Natural killer cell (primary cell): ENCODE measurements at regions of chr2 and their contacts with region 1.

Region 1: GRCh38 chr2:112634153-112634873 is 11.4 kb upstream of the SLC20A1 start:
- DNase-seq: peak in 1 of 2 donors; percentile 68
- ATAC-seq: peak; percentile 22 to 34 (median 28)
- H3K4me3 ChIP-seq: no peak overlapping the region
- H3K4me3 Mint-ChIP-seq: peak overlapping the region; percentile 68
- H3K27ac ChIP-seq: peak overlapping the region; percentile 72
- H3K27ac Mint-ChIP-seq: peak overlapping the region; percentile 96
- H3K4me1 ChIP-seq: peaks cover 76% of the 10 kb centered on the region
- H3K4me1 Mint-ChIP-seq: peaks cover 78 to 80% of the 10 kb centered on the region in 2 donors
- H3K27me3 ChIP-seq: no peaks in the 10 kb centered on the region
- H3K27me3 Mint-ChIP-seq: no peaks in the 10 kb centered on the region
- CTCF ChIP-seq: no peak

Region 2: DNA sequence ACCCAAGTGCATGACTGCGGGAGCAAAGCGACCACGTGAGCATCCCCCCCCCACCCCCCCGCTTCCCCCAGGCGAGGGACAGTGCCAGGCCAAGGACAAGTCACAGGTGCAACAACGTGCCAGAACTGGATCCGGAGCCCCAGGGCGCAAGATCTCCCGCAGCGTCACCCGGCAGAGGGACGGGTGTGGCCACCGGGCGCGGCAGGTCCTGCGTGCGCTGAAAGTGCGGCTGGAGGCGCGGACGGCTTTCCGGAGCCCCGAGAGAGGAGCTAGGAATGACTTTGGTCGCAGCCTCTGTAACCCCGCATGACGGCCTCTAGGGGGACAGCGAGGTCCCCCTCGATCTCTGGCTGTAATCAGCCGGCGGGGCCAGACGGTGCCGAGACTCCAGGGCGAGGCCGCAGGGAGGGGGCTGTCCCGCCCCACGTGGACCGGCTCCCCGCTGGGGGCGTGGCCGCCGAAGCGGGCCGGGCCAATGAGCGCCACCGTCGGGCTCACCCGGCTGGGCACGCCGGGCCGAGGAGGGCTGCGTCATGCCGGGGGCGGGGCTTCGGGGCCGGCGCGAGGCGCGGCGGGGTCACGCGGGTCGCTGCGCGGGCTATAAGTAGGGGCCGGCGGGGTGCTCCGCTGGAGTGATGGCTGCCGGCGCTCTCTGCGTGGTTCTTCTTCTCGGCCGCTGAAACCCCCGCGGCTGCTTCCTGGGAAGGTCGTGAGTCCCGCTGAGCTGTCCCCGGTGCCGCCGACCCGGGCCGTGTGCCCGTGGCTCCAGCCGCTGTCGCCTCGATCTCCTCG is 11.2 kb after region 1 on chr2 and contains the start of gene SLC20A1:
- intact Hi-C with region 1: loop called (anchors 1 kb)
- DNase-seq: peak; percentile 98 to 99
- ATAC-seq: peak; percentile 91 to 99 (median 91)
- H3K4me3 ChIP-seq: peak within 1 kb of the TSS; percentile 95
- H3K4me3 Mint-ChIP-seq: peak within 1 kb of the TSS; percentile 94
- H3K27ac ChIP-seq: peak within 1 kb of the TSS; percentile 90
- H3K27ac Mint-ChIP-seq: peak within 1 kb of the TSS; percentile 89 to 91
- H3K4me1 ChIP-seq: peaks cover 41% of the 10 kb centered on the region
- H3K4me1 Mint-ChIP-seq: peaks cover 77 to 80% of the 10 kb centered on the region in 2 donors
- H3K27me3 ChIP-seq: no peaks in the 10 kb centered on the region
- H3K27me3 Mint-ChIP-seq: no peaks in the 10 kb centered on the region
- CTCF ChIP-seq: peak; percentile 59
- total RNA-seq, gene SLC20A1: 193 to 241 (median 233) TPM

Region 3: GRCh38 chr2:112666764-112667122 is 32.4 kb after region 1 on chr2:
- intact Hi-C with region 1: loop called (anchors 5 kb)
- DNase-seq: no peak
- ATAC-seq: peak in 2 of 3 donors; percentile 49 to 69
- H3K4me3 ChIP-seq: no peak overlapping the region
- H3K4me3 Mint-ChIP-seq: no peak overlapping the region
- H3K27ac ChIP-seq: peak overlapping the region; percentile 43
- H3K27ac Mint-ChIP-seq: peak overlapping the region; percentile 66 to 89
- H3K4me1 ChIP-seq: peaks cover 9% of the 10 kb centered on the region
- H3K4me1 Mint-ChIP-seq: peaks cover 28 to 39% of the 10 kb centered on the region in 2 donors
- H3K27me3 ChIP-seq: no peaks in the 10 kb centered on the region
- H3K27me3 Mint-ChIP-seq: no peaks in the 10 kb centered on the region
- CTCF ChIP-seq: no peak

Region 4: GRCh38 chr2:112724591-112725525 is 90.5 kb after region 1 on chr2:
- intact Hi-C with region 1: no loop called
- DNase-seq: no peak
- ATAC-seq: no peak
- H3K4me3 ChIP-seq: no peak overlapping the region
- H3K4me3 Mint-ChIP-seq: no peak overlapping the region
- H3K27ac ChIP-seq: no peak overlapping the region
- H3K27ac Mint-ChIP-seq: no peak overlapping the region
- H3K4me1 ChIP-seq: peaks cover 21% of the 10 kb centered on the region
- H3K4me1 Mint-ChIP-seq: peaks cover 9 to 21% of the 10 kb centered on the region in 2 donors
- H3K27me3 ChIP-seq: no peaks in the 10 kb centered on the region
- H3K27me3 Mint-ChIP-seq: peaks cover 0 to 1% of the 10 kb centered on the region in 2 donors
- CTCF ChIP-seq: no peak

Region 5: DNA sequence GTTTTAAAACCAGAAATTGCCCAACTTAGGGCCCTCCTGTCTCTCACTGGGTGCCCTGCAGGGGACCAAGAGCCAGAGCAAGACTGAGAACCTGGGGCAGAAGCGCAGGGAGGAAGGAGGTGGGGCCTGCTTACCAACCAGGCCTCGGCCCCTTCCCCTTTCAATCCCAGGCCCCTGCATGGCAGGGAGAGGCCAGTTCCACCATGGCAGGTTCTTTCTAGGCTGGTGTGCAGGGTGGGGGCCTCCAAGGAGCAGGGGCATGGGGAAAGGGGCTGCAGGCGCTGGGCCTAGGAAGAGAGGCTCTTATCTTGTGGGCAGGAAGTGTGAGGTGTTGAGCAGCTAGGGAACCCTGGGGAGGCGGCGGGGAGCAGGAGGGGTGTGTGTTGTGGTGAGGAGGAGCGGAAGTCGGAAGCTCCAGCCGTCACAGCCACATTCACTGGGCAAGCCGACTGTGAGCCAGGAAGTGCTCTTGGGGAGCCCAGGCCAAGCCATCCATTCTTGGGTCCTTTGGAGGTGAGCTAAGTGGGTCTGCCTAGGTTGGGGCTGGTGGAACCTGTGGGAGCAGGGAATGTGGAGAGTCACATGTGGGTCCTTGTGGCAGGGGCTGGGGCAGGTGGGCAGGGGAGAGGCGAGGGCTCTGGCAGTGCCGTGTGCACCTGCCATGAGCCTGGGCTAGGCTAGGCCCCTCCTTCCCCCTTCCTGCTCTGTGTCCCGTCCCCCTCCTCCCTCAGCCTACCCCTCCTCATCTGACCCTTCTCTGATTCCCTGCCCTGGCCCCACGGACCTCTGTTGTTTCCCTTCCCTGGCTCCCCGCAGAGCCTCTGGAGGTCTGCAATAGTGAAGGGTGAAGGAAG is 539.5 kb after region 1 on chr2 and contains the start of gene PSD4:
- intact Hi-C with region 1: loop called (anchors 5 kb)
- DNase-seq: peak; percentile 68 to 94
- ATAC-seq: peak; percentile 56 to 86 (median 75)
- H3K4me3 ChIP-seq: peak within 1 kb of the TSS; percentile 65
- H3K4me3 Mint-ChIP-seq: peak within 1 kb of the TSS; percentile 85
- H3K27ac ChIP-seq: peak within 1 kb of the TSS; percentile 81
- H3K27ac Mint-ChIP-seq: peak within 1 kb of the TSS; percentile 85 to 91
- H3K4me1 ChIP-seq: peaks cover 88% of the 10 kb centered on the region
- H3K4me1 Mint-ChIP-seq: peaks cover 71 to 79% of the 10 kb centered on the region in 2 donors
- H3K27me3 ChIP-seq: no peaks in the 10 kb centered on the region
- H3K27me3 Mint-ChIP-seq: no peaks in the 10 kb centered on the region
- CTCF ChIP-seq: no peak
- total RNA-seq, gene PSD4: 280 to 347 (median 340) TPM